ENCODE measurements at regions of chr15 and their contacts with region 1.

Region 1: GRCh38 chr15:101489633-101490407 is at the start of gene PCSK6:
- DNase-seq: no peak
- total RNA-seq, gene PCSK6: 10.6 TPM

Region 2: GRCh38 chr15:101303408-101303807 is 186.4 kb before region 1 on chr15:
- intact Hi-C with region 1: loop called (anchors 5 kb)
- DNase-seq: no peak

Region 3: GRCh38 chr15:101439285-101439919 is 50.4 kb before region 1 on chr15:
- intact Hi-C with region 1: no loop called
- DNase-seq: no peak

Region 4: GRCh38 chr15:101723171-101723873 is 233.5 kb after region 1 on chr15:
- intact Hi-C with region 1: no loop called
- DNase-seq: no peak